Activated CD8-positive, alpha-beta T cell treated with anti-CD3 and anti-CD28 coated beads for 36 hours (primary cell): ENCODE measurements at regions of chr12 and their contacts with region 1.

Region 1: GRCh38 chr12:10562306-10562933 is 51.0 kb downstream of the MAGOHB start:
- DNase-seq: peak; percentile 35
- ATAC-seq: no peak
- H3K4me3 Mint-ChIP-seq: peak overlapping the region; percentile 10
- H3K27ac Mint-ChIP-seq: peak overlapping the region; percentile 58
- H3K4me1 Mint-ChIP-seq: peaks cover 70% of the 10 kb centered on the region
- H3K27me3 Mint-ChIP-seq: no peaks in the 10 kb centered on the region
- CTCF ChIP-seq: peak; percentile 87

Region 2: GRCh38 chr12:10249690-10250455 is 312.5 kb before region 1 on chr12:
- CTCF ChIA-PET with region 1: no interaction called
- POLR2A ChIA-PET with region 1: no interaction called
- intact Hi-C with region 1: no loop called
- DNase-seq: peak; percentile 42
- ATAC-seq: peak; percentile 77
- H3K4me3 Mint-ChIP-seq: peak overlapping the region; percentile 32
- H3K27ac Mint-ChIP-seq: peak overlapping the region; percentile 80
- H3K4me1 Mint-ChIP-seq: peaks cover 28% of the 10 kb centered on the region
- H3K27me3 Mint-ChIP-seq: no peaks in the 10 kb centered on the region
- CTCF ChIP-seq: no peak

Region 3: GRCh38 chr12:10331642-10332239 is 230.7 kb before region 1 on chr12:
- CTCF ChIA-PET with region 1: interaction called, 3 read pairs
- POLR2A ChIA-PET with region 1: interaction called, 4 read pairs
- intact Hi-C with region 1: loop called (anchors 2 kb)
- DNase-seq: no peak
- ATAC-seq: peak; percentile 82
- H3K4me3 Mint-ChIP-seq: no peak overlapping the region
- H3K27ac Mint-ChIP-seq: no peak overlapping the region
- H3K4me1 Mint-ChIP-seq: peaks cover 18% of the 10 kb centered on the region
- H3K27me3 Mint-ChIP-seq: no peaks in the 10 kb centered on the region
- CTCF ChIP-seq: peak; percentile 79

Region 4: DNA sequence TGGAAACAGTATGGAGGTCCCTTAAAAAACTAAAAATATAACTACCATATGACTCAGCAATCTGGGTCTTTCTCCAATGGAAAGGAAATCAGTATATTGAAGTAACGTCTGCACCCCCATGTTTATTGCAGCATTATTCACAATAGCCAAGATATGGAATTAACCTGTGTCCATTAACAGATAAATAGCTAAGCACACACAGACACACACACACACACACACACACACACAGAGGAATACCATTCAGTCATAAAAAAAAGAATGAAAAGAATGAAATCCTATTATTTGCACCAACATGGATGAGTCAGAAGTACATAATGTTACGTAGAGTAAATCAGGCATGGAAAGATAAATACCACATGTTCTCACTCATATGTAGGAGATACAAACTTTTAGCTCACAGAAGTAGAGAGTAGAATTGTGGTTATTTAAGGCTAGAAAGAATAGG is 177.2 kb before region 1 on chr12:
- CTCF ChIA-PET with region 1: interaction called, 6 read pairs
- POLR2A ChIA-PET with region 1: interaction called, 73 read pairs
- intact Hi-C with region 1: loop called (anchors 5 kb)
- DNase-seq: no peak
- ATAC-seq: peak; percentile 68
- H3K4me3 Mint-ChIP-seq: peak overlapping the region; percentile 90
- H3K27ac Mint-ChIP-seq: peak overlapping the region; percentile 92
- H3K4me1 Mint-ChIP-seq: peaks cover 47% of the 10 kb centered on the region
- H3K27me3 Mint-ChIP-seq: no peaks in the 10 kb centered on the region
- CTCF ChIP-seq: no peak

Region 5: GRCh38 chr12:10501031-10501430 is 61.4 kb before region 1 on chr12:
- CTCF ChIA-PET with region 1: interaction called, 4 read pairs
- POLR2A ChIA-PET with region 1: interaction called, 6 read pairs
- intact Hi-C with region 1: loop called (anchors 5 kb)
- DNase-seq: no peak
- ATAC-seq: no peak
- H3K4me3 Mint-ChIP-seq: peak overlapping the region; percentile 47
- H3K27ac Mint-ChIP-seq: peak overlapping the region; percentile 78
- H3K4me1 Mint-ChIP-seq: peaks cover 65% of the 10 kb centered on the region
- H3K27me3 Mint-ChIP-seq: no peaks in the 10 kb centered on the region
- CTCF ChIP-seq: peak; percentile 38

Region 6: GRCh38 chr12:10584415-10584814 is 22.0 kb after region 1 on chr12:
- CTCF ChIA-PET with region 1: no interaction called
- POLR2A ChIA-PET with region 1: no interaction called
- intact Hi-C with region 1: no loop called
- DNase-seq: no peak
- ATAC-seq: no peak
- H3K4me3 Mint-ChIP-seq: no peak overlapping the region
- H3K27ac Mint-ChIP-seq: no peak overlapping the region
- H3K4me1 Mint-ChIP-seq: no peaks in the 10 kb centered on the region
- H3K27me3 Mint-ChIP-seq: no peaks in the 10 kb centered on the region
- CTCF ChIP-seq: no peak